Psoas muscle (tissue), 8 donors: ENCODE measurements at regions of chr1 and their contacts with region 1.

Region 1: DNA sequence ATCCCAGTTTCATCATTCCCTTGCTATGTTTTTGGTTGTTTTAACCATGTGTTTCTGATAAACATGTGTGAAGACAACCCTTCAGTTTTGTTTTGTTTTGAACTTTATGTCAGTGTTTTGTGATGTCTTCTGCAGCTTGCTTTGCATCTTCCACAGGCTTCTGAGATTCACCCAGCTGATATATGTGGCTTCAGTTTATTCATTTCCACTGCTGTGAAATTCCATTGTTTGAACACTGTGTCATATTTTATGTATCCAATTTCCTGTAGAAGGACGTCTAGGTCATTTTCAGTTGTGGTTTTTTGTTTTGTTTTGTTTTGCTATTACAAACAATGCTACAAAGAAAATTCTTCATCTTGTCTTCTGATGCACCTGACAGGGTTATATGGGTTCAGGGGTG is 27.2 kb upstream of the SLC26A9 start:
- DNase-seq: no peak
- ATAC-seq: peak in 1 of 4 donors; percentile 44
- H3K4me3 ChIP-seq: no peak overlapping the region
- H3K27ac ChIP-seq: peak overlapping the region; percentile 67
- H3K4me1 ChIP-seq: no peaks in the 10 kb centered on the region
- H3K27me3 ChIP-seq: no peaks in the 10 kb centered on the region
- CTCF ChIP-seq: no peak

Region 2: DNA sequence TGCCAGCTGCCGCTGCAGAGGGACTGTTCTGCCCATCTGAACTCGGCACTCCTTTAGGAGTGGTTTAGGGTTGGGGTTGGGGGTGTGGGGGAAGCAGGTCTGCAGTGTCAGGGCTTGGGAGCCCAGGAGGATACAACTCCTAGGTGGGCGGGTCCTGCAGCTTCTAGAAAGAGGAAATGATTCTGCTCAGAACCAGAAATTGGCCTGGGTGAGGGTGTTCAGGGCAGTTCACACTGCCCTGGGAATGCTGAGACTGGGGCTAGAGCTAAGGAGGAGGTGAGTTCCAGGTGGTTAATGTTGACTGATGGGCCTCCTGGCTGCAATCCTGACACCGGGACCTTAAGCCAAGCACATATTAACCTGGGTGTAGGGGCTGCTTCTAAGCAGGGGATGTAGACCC is 22.4 kb before region 1 on chr1:
- intact Hi-C with region 1: loop called in 1 of 2 experiments (anchors 2 kb)
- DNase-seq: no peak
- ATAC-seq: no peak
- H3K4me3 ChIP-seq: no peak overlapping the region
- H3K27ac ChIP-seq: no peak overlapping the region
- H3K4me1 ChIP-seq: peaks cover 32% of the 10 kb centered on the region
- H3K27me3 ChIP-seq: no peaks in the 10 kb centered on the region
- CTCF ChIP-seq: no peak